Caco-2 (cell line): ENCODE measurements at regions of chr7 and their contacts with region 1.

Region 1: DNA sequence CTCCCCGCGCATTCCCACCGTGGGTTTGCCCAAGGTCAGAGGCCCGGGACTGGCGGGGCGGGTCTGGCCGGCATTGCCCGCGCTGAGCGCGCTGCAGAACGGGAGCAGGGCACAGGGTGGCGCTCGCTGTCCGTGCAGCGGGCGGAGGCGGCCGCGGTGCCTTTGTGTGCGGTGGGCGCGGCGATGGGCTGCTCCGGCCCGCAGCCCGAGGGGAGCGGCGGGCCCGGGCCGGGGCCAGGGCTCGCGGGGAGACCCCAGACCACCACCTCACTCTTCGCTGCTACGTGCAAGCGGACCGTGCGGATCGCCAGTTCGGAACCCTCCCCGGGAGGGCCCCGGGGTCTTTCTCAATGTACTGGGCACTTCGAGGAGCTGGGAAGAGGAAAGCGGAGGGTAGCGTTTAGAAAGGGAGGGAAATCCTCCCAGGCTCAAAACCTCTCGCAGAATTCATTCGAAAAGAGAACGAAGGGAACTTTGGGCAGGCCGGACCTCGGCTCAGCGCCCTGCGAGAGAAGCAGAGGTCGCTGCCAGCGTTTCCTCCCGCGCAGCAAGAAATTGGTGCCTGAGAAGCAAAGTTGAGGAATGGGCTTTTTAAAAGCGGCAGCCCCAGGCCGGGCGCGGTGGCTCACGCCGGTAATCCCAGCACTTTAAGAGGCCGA is 8.5 kb downstream of the SP8 start:
- DNase-seq: peak; percentile 60 to 83
- H3K4me3 ChIP-seq: peak overlapping the region; percentile 45
- H3K4me3 Mint-ChIP-seq: peak overlapping the region; percentile 79
- H3K27ac Mint-ChIP-seq: peak overlapping the region; percentile 56
- H3K4me1 ChIP-seq: peaks cover 10% of the 10 kb centered on the region; the same call in 1 of the 2 replicates
- H3K4me1 Mint-ChIP-seq: peaks cover 27% of the 10 kb centered on the region
- H3K27me3 ChIP-seq: no peaks in the 10 kb centered on the region
- H3K27me3 Mint-ChIP-seq: no peaks in the 10 kb centered on the region
- CTCF ChIP-seq: peak; percentile 77 to 81

Region 2: GRCh38 chr7:20834656-20835055 is 56.5 kb after region 1 on chr7:
- CTCF ChIA-PET with region 1: interaction called, 6 read pairs
- POLR2A ChIA-PET with region 1: no interaction called
- intact Hi-C with region 1: loop called (anchors 1 kb)
- DNase-seq: peak in 1 of 2 experiments; percentile 19
- H3K4me3 ChIP-seq: peak overlapping the region; percentile 29; the same call in 1 of the 2 replicates
- H3K4me3 Mint-ChIP-seq: peak overlapping the region; percentile 68
- H3K27ac Mint-ChIP-seq: no peak overlapping the region
- H3K4me1 ChIP-seq: no peaks in the 10 kb centered on the region
- H3K4me1 Mint-ChIP-seq: peaks cover 12% of the 10 kb centered on the region
- H3K27me3 ChIP-seq: no peaks in the 10 kb centered on the region
- H3K27me3 Mint-ChIP-seq: peaks cover 3% of the 10 kb centered on the region
- CTCF ChIP-seq: peak; percentile 50 to 60

Region 3: GRCh38 chr7:20971219-20971618 is 193.0 kb after region 1 on chr7:
- CTCF ChIA-PET with region 1: no interaction called
- POLR2A ChIA-PET with region 1: no interaction called
- intact Hi-C with region 1: loop called (anchors 10 kb)
- DNase-seq: no peak
- H3K4me3 ChIP-seq: no peak overlapping the region
- H3K4me3 Mint-ChIP-seq: no peak overlapping the region
- H3K27ac Mint-ChIP-seq: no peak overlapping the region
- H3K4me1 ChIP-seq: no peaks in the 10 kb centered on the region
- H3K4me1 Mint-ChIP-seq: peaks cover 5% of the 10 kb centered on the region
- H3K27me3 ChIP-seq: no peaks in the 10 kb centered on the region
- H3K27me3 Mint-ChIP-seq: peaks cover 2% of the 10 kb centered on the region
- CTCF ChIP-seq: no peak